PC-9 (cell line): ENCODE measurements at regions of chr5 and their contacts with region 1.

Region 1: GRCh38 chr5:141713616-141714309 is 31.7 kb upstream of the ARAP3 start:
- DNase-seq: peak; percentile 75 to 95
- H3K4me3 ChIP-seq: peak overlapping the region; percentile 36; the same call in 1 of the 2 replicates
- H3K27ac ChIP-seq: peak overlapping the region; percentile 94
- H3K4me1 ChIP-seq: peaks cover 71% of the 10 kb centered on the region
- H3K27me3 ChIP-seq: no peaks in the 10 kb centered on the region
- CTCF ChIP-seq: no peak

Region 2: DNA sequence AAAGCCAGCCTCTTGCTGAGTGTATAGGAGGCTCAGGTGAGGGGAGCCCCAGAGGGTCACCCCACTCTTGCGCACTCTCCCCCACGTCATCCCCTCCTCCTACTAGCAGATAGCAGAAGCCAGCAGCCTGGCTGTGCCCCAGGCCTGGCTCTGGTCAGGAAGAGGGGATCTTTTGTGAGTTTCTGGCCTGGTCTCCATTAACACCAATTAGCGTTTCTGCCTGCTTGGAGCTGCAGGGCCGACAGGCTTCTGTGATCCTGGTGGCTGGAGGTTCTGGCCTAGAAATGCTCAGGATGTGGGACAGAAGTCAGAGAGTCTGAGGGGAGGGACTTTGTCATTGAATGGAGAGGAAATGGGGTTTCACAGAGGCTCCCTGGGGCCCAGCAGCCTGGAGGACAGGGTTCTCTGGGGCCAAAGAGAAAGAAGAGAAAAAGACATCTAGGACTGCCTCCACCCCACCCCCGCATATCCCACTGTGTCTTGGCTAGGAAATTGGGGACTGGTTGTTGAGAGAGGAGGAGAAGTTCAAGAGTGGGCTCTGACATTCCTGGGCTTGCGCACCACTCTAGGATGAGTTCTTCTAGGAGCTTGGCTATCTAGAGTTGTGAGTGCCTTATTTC is 15.7 kb after region 1 on chr5:
- CTCF ChIA-PET with region 1: no interaction called
- POLR2A ChIA-PET with region 1: interaction called, 13 read pairs
- intact Hi-C with region 1: no loop called
- DNase-seq: no peak
- H3K4me3 ChIP-seq: no peak overlapping the region
- H3K27ac ChIP-seq: no peak overlapping the region
- H3K4me1 ChIP-seq: peaks cover 6% of the 10 kb centered on the region; the same call in 1 of the 2 replicates
- H3K27me3 ChIP-seq: no peaks in the 10 kb centered on the region
- CTCF ChIP-seq: no peak

Region 3: DNA sequence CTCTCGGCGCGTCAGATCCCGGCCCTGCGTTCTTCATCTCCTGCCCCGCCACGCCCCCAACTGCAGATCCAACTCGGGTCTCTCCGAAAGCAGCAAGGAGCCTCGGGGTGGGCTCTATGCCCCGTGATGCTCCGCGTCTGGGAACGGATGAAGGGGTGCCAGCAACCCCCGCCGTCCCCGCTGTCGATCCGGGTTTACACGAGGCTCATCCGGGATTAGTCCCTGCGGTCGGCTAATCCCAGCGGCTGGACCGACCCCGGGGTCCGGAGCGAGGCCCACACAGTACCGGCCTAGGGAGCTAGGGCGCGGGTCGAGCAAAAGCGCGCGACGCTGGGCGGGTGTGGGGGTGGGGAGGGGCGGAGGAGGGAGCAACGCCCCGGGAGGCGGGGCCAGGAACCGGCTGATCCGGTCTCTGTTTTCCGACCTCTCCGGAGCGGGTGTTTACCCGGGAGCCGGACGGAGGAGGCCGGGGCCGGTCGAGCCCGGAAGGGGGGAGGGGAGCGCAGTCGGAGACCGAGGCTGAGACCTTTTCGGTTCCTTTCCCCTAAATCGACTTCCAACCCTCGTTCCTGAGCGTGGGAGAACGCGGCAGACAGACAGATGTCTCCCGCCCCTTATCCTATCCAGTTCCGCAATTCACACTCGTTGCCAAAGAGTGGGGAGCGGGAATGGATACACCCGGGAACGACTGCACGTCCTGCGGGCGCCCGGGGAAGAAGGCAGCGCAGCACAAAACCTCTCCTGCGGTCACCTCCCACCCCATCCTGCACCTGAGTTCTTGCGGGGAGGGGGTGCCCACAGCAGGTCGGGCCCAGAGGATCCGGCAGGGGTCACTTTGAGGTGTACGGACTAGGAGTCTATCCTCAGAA is 135.8 kb after region 1 on chr5:
- CTCF ChIA-PET with region 1: interaction called, 3 read pairs
- POLR2A ChIA-PET with region 1: interaction called, 7 read pairs
- intact Hi-C with region 1: loop called (anchors 1 kb)
- DNase-seq: peak; percentile 72 to 89
- H3K4me3 ChIP-seq: peak overlapping the region; percentile 98
- H3K27ac ChIP-seq: peak overlapping the region; percentile 99
- H3K4me1 ChIP-seq: peaks cover 41% of the 10 kb centered on the region
- H3K27me3 ChIP-seq: no peaks in the 10 kb centered on the region
- CTCF ChIP-seq: no peak

Region 4: GRCh38 chr5:141866149-141867120 is 152.7 kb after region 1 on chr5:
- CTCF ChIA-PET with region 1: no interaction called
- POLR2A ChIA-PET with region 1: no interaction called
- intact Hi-C with region 1: loop called (anchors 1 kb)
- DNase-seq: peak; percentile 95 to 96
- H3K4me3 ChIP-seq: peak overlapping the region; percentile 1; the same call in 1 of the 2 replicates
- H3K27ac ChIP-seq: peak overlapping the region; percentile 78
- H3K4me1 ChIP-seq: peaks cover 71% of the 10 kb centered on the region
- H3K27me3 ChIP-seq: no peaks in the 10 kb centered on the region
- CTCF ChIP-seq: no peak

Region 5: GRCh38 chr5:141889282-141889871 is 175.6 kb after region 1 on chr5:
- CTCF ChIA-PET with region 1: no interaction called
- POLR2A ChIA-PET with region 1: no interaction called
- intact Hi-C with region 1: no loop called
- DNase-seq: no peak
- H3K4me3 ChIP-seq: no peak overlapping the region
- H3K27ac ChIP-seq: no peak overlapping the region
- H3K4me1 ChIP-seq: no peaks in the 10 kb centered on the region
- H3K27me3 ChIP-seq: no peaks in the 10 kb centered on the region
- CTCF ChIP-seq: peak; percentile 59; the same call in 1 of the 2 replicates

Region 6: DNA sequence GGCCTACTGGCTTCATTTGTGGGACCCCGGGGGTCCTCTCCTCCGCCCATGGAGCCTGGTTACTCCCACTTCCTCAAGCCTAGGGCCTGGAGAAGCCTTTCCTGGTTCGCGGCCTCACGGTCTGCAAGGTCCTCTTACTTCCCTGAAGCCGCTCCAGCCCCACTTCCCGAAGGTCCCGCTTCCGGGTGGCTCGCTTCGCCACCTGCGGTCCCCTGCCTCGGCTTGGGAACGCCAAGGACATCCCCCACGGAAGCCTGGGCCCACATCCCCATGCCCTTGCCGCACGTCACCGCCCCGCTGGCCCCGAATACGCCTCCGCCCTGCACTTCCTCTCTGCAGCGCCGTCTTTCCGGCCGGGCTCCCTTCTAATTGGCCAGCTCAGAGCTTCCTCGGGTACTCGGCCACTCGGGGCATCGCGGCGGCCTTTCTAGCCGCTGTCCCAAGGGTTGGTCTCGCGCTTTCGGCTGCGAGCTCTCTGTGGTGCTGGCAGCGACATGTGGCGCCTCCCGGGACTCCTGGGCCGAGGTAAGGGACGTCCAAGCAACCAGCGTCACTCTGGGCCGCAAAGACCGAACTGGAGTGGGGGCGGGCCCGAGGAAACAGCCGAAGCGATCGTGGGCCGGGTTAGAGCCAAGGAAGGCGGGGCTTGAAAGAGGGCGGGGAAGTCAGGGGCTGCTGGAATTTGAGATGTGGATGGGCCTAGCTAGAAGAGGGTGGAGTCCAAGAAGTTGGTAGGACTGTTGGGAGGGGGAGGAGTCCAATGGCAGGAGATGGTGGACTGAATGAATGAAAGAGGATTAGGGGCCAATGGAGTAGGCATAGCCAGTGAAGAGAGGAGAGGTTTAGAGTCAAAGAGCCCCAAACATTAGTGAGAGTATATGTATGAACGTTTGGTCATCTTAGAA is 209.9 kb after region 1 on chr5 and contains the start of gene DELE1:
- CTCF ChIA-PET with region 1: no interaction called
- POLR2A ChIA-PET with region 1: no interaction called
- intact Hi-C with region 1: no loop called
- DNase-seq: peak; percentile 89 to 93
- H3K4me3 ChIP-seq: peak within 1 kb of the TSS; percentile 98
- H3K27ac ChIP-seq: peak within 1 kb of the TSS; percentile 86
- H3K4me1 ChIP-seq: peaks cover 12% of the 10 kb centered on the region
- H3K27me3 ChIP-seq: no peaks in the 10 kb centered on the region
- CTCF ChIP-seq: no peak
- total RNA-seq, gene DELE1: 68.5 and 80.8 TPM in 2 replicates